ENCODE measurements at regions of chr20 and their contacts with region 1.

Region 1: GRCh38 chr20:62500237-62500864 is 24.6 kb upstream of the GATA5 start:
- DNase-seq: peak; percentile 70
- H3K4me3 Mint-ChIP-seq: no peak overlapping the region
- H3K27ac Mint-ChIP-seq: peak overlapping the region; percentile 89
- H3K4me1 Mint-ChIP-seq: peaks cover 26% of the 10 kb centered on the region
- H3K27me3 Mint-ChIP-seq: no peaks in the 10 kb centered on the region

Region 2: DNA sequence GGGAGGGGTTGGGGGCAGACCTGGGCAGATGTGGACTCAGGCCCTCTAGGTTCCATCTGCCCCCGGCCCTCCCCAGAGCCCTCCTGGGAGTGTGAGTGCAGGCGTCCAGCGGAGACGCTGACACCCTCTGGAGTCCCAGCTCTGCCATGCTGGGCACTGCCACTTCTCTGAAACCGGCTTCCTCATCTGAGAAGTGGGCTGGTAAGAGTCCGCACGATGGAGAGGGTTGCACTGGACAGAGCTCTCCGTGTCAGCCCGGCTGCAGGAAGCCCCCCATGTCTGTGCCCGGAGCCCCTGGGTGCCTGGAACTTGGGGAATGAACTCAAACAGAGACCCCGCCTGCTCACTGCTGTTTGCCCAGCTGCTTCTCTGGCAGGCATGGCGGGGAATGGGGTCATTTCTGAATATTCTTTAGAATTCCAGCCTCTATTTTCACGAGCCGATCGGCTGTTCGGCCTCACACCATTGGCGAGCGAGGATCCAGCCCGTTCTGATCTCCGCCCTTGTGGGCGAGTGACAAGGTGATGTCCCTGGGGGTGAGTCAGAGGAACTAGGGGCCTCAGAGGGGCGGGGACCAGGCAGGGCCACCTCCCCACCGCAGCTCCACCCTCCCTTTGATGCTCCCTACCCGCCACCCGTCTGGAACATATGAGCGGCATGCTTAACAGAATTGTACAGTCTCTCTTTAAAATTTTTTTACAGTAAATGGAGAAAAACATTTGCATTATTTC is 23.3 kb after region 1 on chr20:
- intact Hi-C with region 1: loop called (anchors 1 kb)
- DNase-seq: peak; percentile 44
- H3K4me3 Mint-ChIP-seq: peak overlapping the region; percentile 40
- H3K27ac Mint-ChIP-seq: peak overlapping the region; percentile 44
- H3K4me1 Mint-ChIP-seq: peaks cover 13% of the 10 kb centered on the region
- H3K27me3 Mint-ChIP-seq: peaks cover 7% of the 10 kb centered on the region

Region 3: GRCh38 chr20:62616728-62617621 is 116.6 kb after region 1 on chr20:
- intact Hi-C with region 1: loop called (anchors 1 kb)
- DNase-seq: peak; percentile 63
- H3K4me3 Mint-ChIP-seq: peak overlapping the region; percentile 81
- H3K27ac Mint-ChIP-seq: peak overlapping the region; percentile 96
- H3K4me1 Mint-ChIP-seq: peaks cover 28% of the 10 kb centered on the region
- H3K27me3 Mint-ChIP-seq: peaks cover 9% of the 10 kb centered on the region

Region 4: GRCh38 chr20:62740286-62741141 is 240.2 kb after region 1 on chr20:
- intact Hi-C with region 1: loop called (anchors 1 kb)
- DNase-seq: peak; percentile 84
- H3K4me3 Mint-ChIP-seq: peak overlapping the region; percentile 65
- H3K27ac Mint-ChIP-seq: peak overlapping the region; percentile 80
- H3K4me1 Mint-ChIP-seq: peaks cover 31% of the 10 kb centered on the region
- H3K27me3 Mint-ChIP-seq: peaks cover 15% of the 10 kb centered on the region

Region 5: DNA sequence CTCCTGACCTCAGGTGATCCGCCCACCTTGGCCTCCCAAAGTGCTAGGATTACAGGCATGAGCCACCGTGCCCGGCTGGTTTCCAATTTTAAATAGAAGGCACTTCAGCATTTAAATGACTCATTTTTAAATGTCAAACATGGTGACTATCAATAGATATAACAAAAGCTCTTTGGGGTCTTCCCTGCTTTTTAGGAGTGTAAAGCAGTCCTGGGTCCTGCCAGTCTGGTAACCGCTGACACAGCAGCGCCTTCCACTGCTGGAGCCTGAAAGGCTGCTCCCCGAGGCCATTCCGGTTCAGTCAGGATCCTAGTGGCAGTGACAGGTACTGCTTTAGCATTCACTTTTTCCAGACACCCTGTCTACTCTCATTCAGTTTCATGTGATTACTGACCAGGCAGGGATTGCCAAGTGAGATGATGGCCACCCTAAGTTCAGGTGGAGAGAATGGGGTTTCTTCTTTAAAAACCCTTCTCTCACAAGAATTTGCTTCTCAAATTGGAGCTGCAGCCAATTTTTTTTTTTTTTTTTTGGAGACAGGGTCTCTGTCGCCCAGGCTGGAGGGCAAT is 420.9 kb after region 1 on chr20:
- intact Hi-C with region 1: loop called (anchors 5 kb)
- DNase-seq: peak; percentile 54
- H3K4me3 Mint-ChIP-seq: peak overlapping the region; percentile 69
- H3K27ac Mint-ChIP-seq: peak overlapping the region; percentile 86
- H3K4me1 Mint-ChIP-seq: peaks cover 78% of the 10 kb centered on the region
- H3K27me3 Mint-ChIP-seq: no peaks in the 10 kb centered on the region

Measured in activated T-helper 1 cell treated with anti-CD3 and anti-CD28 coated beads, Interleukin-12 subunit alpha, Interleukin-12 subunit beta, Interleukin-2, Interleukin-4 antibody, amounts not matched to agents 30 ng/mL and 10 ng/mL and 1 ng/mL, durations not matched to agents 14 hours and 24 hours and 36 hours (primary cell).